Transverse colon (tissue), 4 donors: ENCODE measurements at regions of chr18 and their contacts with region 1.

Region 1: DNA sequence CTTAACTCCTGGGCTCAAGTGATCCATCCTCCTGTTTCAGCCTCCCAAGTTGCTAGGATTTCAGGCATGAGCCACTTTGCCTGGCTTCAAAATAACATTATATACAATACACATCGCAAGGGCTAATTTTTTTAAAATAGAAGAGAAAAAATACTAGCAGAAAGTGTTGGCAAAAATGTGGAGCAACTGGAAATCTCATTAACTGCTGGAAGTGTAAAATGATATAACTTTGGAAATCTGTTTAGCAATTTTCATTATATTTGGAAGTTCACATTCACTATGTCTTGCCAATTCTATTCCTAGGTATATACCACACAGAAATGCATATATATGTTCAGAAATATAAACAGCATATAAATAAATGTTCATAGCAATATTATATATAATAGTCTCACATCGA is 55.1 kb upstream of the ZBTB14 start:
- DNase-seq: no peak
- H3K4me3 ChIP-seq: no peak overlapping the region
- H3K27ac ChIP-seq: no peak overlapping the region
- H3K4me1 ChIP-seq: no peaks in the 10 kb centered on the region
- H3K27me3 ChIP-seq: no peaks in the 10 kb centered on the region
- CTCF ChIP-seq: no peak
- EP300 ChIP-seq: no peak
- POLR2A ChIP-seq: no peak

Region 2: DNA sequence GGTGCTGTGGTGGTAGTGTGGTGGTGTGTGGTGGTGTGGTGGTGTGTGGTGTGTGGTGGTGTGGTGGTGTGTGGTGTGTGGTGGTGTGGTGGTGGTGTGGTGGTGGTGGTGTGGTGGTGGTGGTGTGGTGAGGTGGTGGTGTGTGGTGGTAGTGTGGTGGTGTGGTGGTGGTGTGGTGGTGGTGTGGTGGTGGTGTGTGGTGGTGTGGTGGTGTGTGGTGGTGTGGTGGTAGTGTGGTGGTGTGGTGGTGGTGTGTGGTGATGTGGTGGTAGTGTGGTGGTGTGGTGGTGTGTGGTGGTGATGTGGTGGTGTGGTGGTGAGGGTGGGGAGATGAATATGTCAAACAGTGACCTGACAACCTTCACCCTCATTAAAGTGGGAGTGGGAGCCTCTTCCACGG is 839.9 kb before region 1 on chr18:
- in situ Hi-C with region 1: no loop called
- intact Hi-C with region 1: loop called (anchors 10 kb)
- DNase-seq: no peak
- H3K4me3 ChIP-seq: no peak overlapping the region
- H3K27ac ChIP-seq: no peak overlapping the region
- H3K4me1 ChIP-seq: no peaks in the 10 kb centered on the region
- H3K27me3 ChIP-seq: no peaks in the 10 kb centered on the region
- CTCF ChIP-seq: no peak
- EP300 ChIP-seq: no peak
- POLR2A ChIP-seq: no peak